B cell (primary cell): ENCODE measurements at regions of chr12 and their contacts with region 1.

Region 1: GRCh38 chr12:52004042-52004648 is 2.6 kb upstream of the TAMALIN start:
- DNase-seq: peak; percentile 51
- ATAC-seq: no peak
- H3K4me3 ChIP-seq: no peak overlapping the region
- H3K4me3 Mint-ChIP-seq: no peak overlapping the region
- H3K27ac ChIP-seq: no peak overlapping the region
- H3K27ac Mint-ChIP-seq: no peak overlapping the region
- H3K4me1 ChIP-seq: peaks cover 26 to 32% of the 10 kb centered on the region in 2 donors
- H3K4me1 Mint-ChIP-seq: peaks cover 37% of the 10 kb centered on the region
- H3K27me3 ChIP-seq: no peaks in the 10 kb centered on the region
- H3K27me3 Mint-ChIP-seq: no peaks in the 10 kb centered on the region
- CTCF ChIP-seq: peak; percentile 3

Region 2: GRCh38 chr12:51653431-51653830 is 350.7 kb before region 1 on chr12:
- CTCF ChIA-PET with region 1: no interaction called
- POLR2A ChIA-PET with region 1: no interaction called
- intact Hi-C with region 1: no loop called
- DNase-seq: no peak
- ATAC-seq: no peak
- H3K4me3 ChIP-seq: no peak overlapping the region
- H3K4me3 Mint-ChIP-seq: no peak overlapping the region
- H3K27ac ChIP-seq: no peak overlapping the region
- H3K27ac Mint-ChIP-seq: no peak overlapping the region
- H3K4me1 ChIP-seq: no peaks in the 10 kb centered on the region
- H3K4me1 Mint-ChIP-seq: no peaks in the 10 kb centered on the region
- H3K27me3 ChIP-seq: peaks cover 0 to 10% (median 2%) of the 10 kb centered on the region in 4 experiments
- H3K27me3 Mint-ChIP-seq: peaks cover 24% of the 10 kb centered on the region
- CTCF ChIP-seq: no peak

Region 3: GRCh38 chr12:51951199-51951842 is 52.8 kb before region 1 on chr12 and contains the start of gene ACVR1B:
- CTCF ChIA-PET with region 1: no interaction called
- POLR2A ChIA-PET with region 1: no interaction called
- intact Hi-C with region 1: loop called (anchors 1 kb)
- DNase-seq: peak; percentile 90
- ATAC-seq: peak; percentile 93
- H3K4me3 ChIP-seq: peak within 1 kb of the TSS; percentile 48 to 80 (median 75)
- H3K4me3 Mint-ChIP-seq: peak within 1 kb of the TSS; percentile 97
- H3K27ac ChIP-seq: peak within 1 kb of the TSS; percentile 6 to 60
- H3K27ac Mint-ChIP-seq: peak within 1 kb of the TSS; percentile 80
- H3K4me1 ChIP-seq: peaks cover 9 to 18% of the 10 kb centered on the region in 2 donors
- H3K4me1 Mint-ChIP-seq: peaks cover 26% of the 10 kb centered on the region
- H3K27me3 ChIP-seq: peaks cover 0 to 28% (median 6%) of the 10 kb centered on the region in 4 experiments
- H3K27me3 Mint-ChIP-seq: peaks cover 27% of the 10 kb centered on the region
- CTCF ChIP-seq: no peak
- total RNA-seq, gene ACVR1B: 8.7 and 10.6 TPM in 2 replicates

Region 4: DNA sequence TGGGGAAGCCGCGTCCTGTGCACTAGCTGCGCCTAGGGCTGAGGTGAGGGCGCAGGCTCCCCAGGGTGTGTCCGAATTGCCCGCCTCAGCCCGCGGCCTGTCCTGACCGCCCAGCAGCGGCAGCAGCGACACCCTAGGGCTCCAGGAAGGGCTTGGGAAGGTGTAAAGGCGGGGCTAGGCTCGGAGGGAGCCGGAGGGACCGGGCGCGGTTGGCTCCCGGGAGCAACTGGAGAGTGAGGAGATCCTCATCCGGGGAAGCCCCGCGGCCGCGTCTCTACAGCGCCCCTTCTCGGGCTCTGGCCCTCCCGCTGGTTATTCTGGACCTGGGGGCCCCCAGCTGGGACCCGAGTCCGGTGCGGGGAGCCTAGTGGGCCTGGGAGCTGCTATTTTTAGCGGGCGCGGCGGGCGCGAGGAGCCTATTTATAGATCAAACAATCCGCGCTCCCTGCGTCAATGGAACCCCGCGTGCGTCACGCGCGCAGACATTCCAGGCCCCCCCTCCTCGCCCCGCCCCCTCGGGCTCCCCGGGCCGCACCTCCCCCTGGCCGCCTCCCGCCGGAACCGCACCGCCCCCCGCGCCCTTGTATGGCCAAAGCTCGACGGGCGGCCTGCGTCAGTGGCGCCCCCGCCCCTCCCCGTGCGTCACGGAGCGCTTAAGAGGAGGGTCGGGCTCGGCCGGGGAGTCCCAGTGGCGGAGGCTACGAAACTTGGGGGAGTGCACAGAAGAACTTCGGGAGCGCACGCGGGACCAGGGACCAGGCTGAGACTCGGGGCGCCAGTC is 46.8 kb after region 1 on chr12 and contains the start of gene NR4A1:
- CTCF ChIA-PET with region 1: interaction called, 4 read pairs
- POLR2A ChIA-PET with region 1: interaction called, 8 read pairs
- intact Hi-C with region 1: loop called (anchors 1 kb)
- DNase-seq: peak; percentile 99
- ATAC-seq: peak; percentile 80
- H3K4me3 ChIP-seq: peak within 1 kb of the TSS; percentile 73 to 92 (median 86)
- H3K4me3 Mint-ChIP-seq: peak within 1 kb of the TSS; percentile 100
- H3K27ac ChIP-seq: peak within 1 kb of the TSS; percentile 99 to 100
- H3K27ac Mint-ChIP-seq: peak within 1 kb of the TSS; percentile 99
- H3K4me1 ChIP-seq: peaks cover 25 to 38% of the 10 kb centered on the region in 2 donors
- H3K4me1 Mint-ChIP-seq: peaks cover 45% of the 10 kb centered on the region
- H3K27me3 ChIP-seq: no peaks in the 10 kb centered on the region
- H3K27me3 Mint-ChIP-seq: no peaks in the 10 kb centered on the region
- CTCF ChIP-seq: no peak
- total RNA-seq, gene NR4A1: 43.2 and 52.8 TPM in 2 replicates

Region 5: DNA sequence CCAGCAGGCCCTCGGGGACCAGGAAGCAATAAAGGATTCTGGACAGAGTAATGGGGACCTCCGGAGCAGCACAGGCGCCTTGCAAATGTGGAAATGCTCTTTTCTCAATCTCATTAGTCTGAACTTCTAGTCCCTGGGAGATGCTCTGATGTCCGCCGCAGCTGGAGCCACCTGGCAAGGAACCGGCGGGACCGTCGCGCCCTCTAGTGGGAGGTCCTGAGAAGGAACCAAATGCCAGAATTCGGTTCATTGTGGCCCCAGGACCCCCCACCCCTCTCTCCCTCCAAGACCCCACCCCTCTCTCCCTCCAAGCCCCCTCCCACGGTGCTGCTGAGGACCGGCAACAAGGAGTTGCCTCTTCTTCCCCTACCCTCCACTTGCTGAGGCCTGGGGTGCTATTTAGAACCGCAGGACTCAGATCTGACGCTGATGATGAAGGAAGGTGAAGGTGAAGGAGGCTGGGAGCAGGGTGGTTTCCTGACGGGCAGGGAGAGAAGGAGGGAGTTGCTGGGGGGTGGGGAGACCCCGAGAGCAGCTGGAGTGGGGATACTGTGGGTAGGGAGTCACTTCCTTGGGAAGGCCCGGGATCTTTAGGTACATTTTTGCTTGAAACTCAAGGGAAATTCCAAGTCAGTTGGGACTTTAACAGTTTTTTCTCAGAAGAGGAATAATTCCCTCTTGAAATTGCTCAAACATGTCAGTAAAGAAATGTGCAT is 117.8 kb after region 1 on chr12:
- CTCF ChIA-PET with region 1: interaction called, 36 read pairs
- POLR2A ChIA-PET with region 1: interaction called, 4 read pairs
- intact Hi-C with region 1: loop called (anchors 1 kb)
- DNase-seq: peak; percentile 73
- ATAC-seq: no peak
- H3K4me3 ChIP-seq: no peak overlapping the region
- H3K4me3 Mint-ChIP-seq: no peak overlapping the region
- H3K27ac ChIP-seq: no peak overlapping the region
- H3K27ac Mint-ChIP-seq: peak overlapping the region; percentile 74
- H3K4me1 ChIP-seq: peaks cover 25 to 36% of the 10 kb centered on the region in 2 donors
- H3K4me1 Mint-ChIP-seq: peaks cover 38% of the 10 kb centered on the region
- H3K27me3 ChIP-seq: peaks cover 0 to 28% (median 8%) of the 10 kb centered on the region in 4 experiments
- H3K27me3 Mint-ChIP-seq: peaks cover 10% of the 10 kb centered on the region
- CTCF ChIP-seq: peak; percentile 87